Endothelial cell of umbilical vein (primary cell): ENCODE measurements at regions of chr1 and their contacts with region 1.

Region 1: GRCh38 chr1:209627732-209628196 is 24.5 kb downstream of the LAMB3 start:
- DNase-seq: peak; percentile 78
- H3K4me3 ChIP-seq: no peak overlapping the region
- H3K27ac ChIP-seq: no peak overlapping the region
- H3K4me1 ChIP-seq: no peaks in the 10 kb centered on the region
- H3K27me3 ChIP-seq: no peaks in the 10 kb centered on the region
- CTCF ChIP-seq: peak; percentile 95 to 99
- POLR2A ChIP-seq: no peak

Region 2: GRCh38 chr1:209291715-209292114 is 336.0 kb before region 1 on chr1:
- CTCF ChIA-PET with region 1: no interaction called
- POLR2A ChIA-PET with region 1: no interaction called
- dilution Hi-C with region 1: no loop called
- intact Hi-C with region 1: no loop called
- DNase-seq: no peak
- H3K4me3 ChIP-seq: no peak overlapping the region
- H3K27ac ChIP-seq: no peak overlapping the region
- H3K4me1 ChIP-seq: no peaks in the 10 kb centered on the region
- H3K27me3 ChIP-seq: no peaks in the 10 kb centered on the region
- CTCF ChIP-seq: no peak
- POLR2A ChIP-seq: no peak

Region 3: GRCh38 chr1:209585672-209586071 is 42.1 kb before region 1 on chr1:
- CTCF ChIA-PET with region 1: interaction called, 42 read pairs
- POLR2A ChIA-PET with region 1: no interaction called
- dilution Hi-C with region 1: no loop called
- intact Hi-C with region 1: loop called (anchors 5 kb)
- DNase-seq: no peak
- H3K4me3 ChIP-seq: no peak overlapping the region
- H3K27ac ChIP-seq: no peak overlapping the region
- H3K4me1 ChIP-seq: peaks cover 9% of the 10 kb centered on the region
- H3K27me3 ChIP-seq: peaks cover 42 to 43% of the 10 kb centered on the region in 2 experiments
- CTCF ChIP-seq: no peak
- POLR2A ChIP-seq: no peak

Region 4: DNA sequence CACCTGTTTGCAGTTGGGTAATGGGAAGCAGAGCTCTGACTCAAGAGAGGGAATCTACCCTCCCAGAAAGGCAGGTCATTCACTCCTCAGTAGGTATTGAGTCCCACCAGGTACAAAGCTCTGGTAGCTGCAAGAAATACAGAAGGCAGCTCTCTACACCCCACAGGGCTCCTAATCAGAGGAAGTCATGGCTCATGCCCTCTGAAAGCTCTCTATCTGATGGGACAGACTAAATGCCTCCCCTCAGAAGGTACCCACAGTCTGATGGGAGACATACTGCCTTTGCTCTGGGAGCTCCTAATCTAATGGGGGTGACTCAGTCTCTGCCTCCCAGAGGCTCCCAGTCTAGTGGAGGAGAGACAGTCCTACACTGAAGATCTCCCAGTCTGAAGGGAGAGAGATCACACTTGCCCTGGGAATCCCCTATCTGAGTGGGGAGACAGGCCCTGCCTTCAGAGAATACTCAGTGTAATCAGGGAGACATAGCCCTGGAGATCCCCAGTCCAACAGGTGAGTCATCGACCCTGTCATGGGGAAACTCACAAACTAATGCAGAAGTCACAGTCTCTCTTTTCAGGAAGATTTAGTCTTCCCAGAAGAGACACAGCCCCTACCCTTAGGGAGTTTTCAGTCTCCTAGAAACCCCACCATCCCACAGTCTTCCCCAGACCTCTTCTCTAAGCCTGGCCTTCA is 20.5 kb before region 1 on chr1:
- CTCF ChIA-PET with region 1: interaction called, 23 read pairs
- POLR2A ChIA-PET with region 1: no interaction called
- dilution Hi-C with region 1: no loop called
- intact Hi-C with region 1: loop called (anchors 1 kb)
- DNase-seq: no peak
- H3K4me3 ChIP-seq: no peak overlapping the region
- H3K27ac ChIP-seq: no peak overlapping the region
- H3K4me1 ChIP-seq: no peaks in the 10 kb centered on the region
- H3K27me3 ChIP-seq: peaks cover 2 to 6% of the 10 kb centered on the region in 2 experiments
- CTCF ChIP-seq: no peak
- POLR2A ChIP-seq: no peak

Region 5: GRCh38 chr1:209651148-209651547 is 23.4 kb after region 1 on chr1:
- CTCF ChIA-PET with region 1: interaction called, 10 read pairs
- POLR2A ChIA-PET with region 1: no interaction called
- dilution Hi-C with region 1: no loop called
- intact Hi-C with region 1: no loop called
- DNase-seq: peak; percentile 77
- H3K4me3 ChIP-seq: no peak overlapping the region
- H3K27ac ChIP-seq: peak overlapping the region; percentile 60
- H3K4me1 ChIP-seq: peaks cover 27% of the 10 kb centered on the region
- H3K27me3 ChIP-seq: no peaks in the 10 kb centered on the region
- CTCF ChIP-seq: no peak
- POLR2A ChIP-seq: no peak